Heart right ventricle (tissue), 16 donors: ENCODE measurements at regions of chr4 and their contacts with region 1.

Region 1: DNA sequence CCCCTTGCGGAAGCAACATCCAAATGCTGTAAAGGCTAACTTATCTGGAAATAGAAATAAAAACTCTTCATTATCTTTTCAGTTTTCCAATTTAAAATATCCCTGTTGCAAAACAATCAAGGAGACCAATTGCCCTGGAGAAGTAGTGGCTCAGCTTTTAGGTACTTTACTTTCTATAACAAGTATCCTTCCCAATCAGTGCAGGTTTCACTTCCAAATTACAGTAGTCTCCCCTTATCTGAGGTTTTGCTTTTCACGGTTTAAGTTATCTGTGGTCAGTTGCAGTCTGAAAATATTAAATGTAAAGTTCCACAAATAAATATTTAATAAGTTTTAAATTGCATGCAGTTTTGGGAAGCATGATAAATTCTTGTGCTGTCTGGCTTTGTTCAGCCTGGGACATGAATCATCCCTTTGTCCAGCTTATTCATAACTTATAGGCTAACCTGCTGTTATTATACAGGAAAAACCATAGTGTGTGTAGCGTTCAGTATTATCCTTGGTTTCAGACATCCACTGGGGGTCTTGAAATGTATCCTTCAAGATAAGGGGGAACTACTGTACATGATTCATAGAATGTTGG is 973.1 kb upstream of the GRID2 start:
- DNase-seq: no peak
- ATAC-seq: no peak
- H3K4me3 ChIP-seq: no peak overlapping the region
- H3K27ac ChIP-seq: no peak overlapping the region
- H3K4me1 ChIP-seq: no peaks in the 10 kb centered on the region
- H3K27me3 ChIP-seq: no peaks in the 10 kb centered on the region
- CTCF ChIP-seq: no peak

Region 2: GRCh38 chr4:89539797-89540711 is 1790.6 kb before region 1 on chr4:
- intact Hi-C with region 1: loop called in 1 of 10 experiments (anchors 5 kb)
- DNase-seq: no peak
- ATAC-seq: no peak
- H3K4me3 ChIP-seq: no peak overlapping the region
- H3K27ac ChIP-seq: no peak overlapping the region
- H3K4me1 ChIP-seq: no peaks in the 10 kb centered on the region
- H3K27me3 ChIP-seq: no peaks in the 10 kb centered on the region
- CTCF ChIP-seq: no peak

Region 3: DNA sequence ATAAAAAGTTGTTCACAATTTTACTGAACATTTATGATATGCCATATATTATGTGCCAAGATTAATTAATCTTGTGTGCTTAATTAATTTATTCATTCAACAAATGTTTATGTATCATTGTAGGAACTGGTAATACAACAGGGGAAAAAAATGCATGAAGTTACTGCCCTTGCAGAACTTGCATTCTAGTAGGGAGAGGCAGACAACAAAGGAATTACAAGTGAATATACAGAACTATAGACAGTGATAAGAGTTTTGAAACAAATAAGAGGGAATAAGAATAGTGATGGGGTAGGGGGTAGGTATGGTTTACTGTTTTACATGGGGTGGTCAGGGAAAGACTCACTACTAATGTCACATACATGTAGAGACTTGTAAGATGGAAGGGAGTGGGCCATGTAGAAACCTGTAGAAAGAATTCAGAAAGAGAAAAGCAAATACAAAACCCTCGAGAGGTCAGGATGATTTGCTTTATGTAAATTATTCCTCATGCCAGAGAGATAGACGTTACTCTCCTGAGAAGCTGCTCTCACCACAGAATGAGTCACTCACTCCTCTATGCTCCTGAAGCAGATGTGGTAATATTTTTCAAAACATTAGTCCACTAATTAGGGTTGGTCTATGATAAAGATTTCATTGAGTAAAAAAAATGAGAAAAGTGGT is 118.2 kb after region 1 on chr4:
- intact Hi-C with region 1: no loop called
- DNase-seq: no peak
- ATAC-seq: no peak
- H3K4me3 ChIP-seq: no peak overlapping the region
- H3K27ac ChIP-seq: no peak overlapping the region
- H3K4me1 ChIP-seq: no peaks in the 10 kb centered on the region
- H3K27me3 ChIP-seq: no peaks in the 10 kb centered on the region
- CTCF ChIP-seq: no peak